ENCODE measurements at regions of chr17 and their contacts with region 1.

Region 1: GRCh38 chr17:77404812-77405581 is 264.2 kb downstream of the SEC14L1 start:
- DNase-seq: peak; percentile 83
- H3K4me3 Mint-ChIP-seq: peak overlapping the region; percentile 92
- H3K27ac Mint-ChIP-seq: peak overlapping the region; percentile 92
- H3K4me1 Mint-ChIP-seq: peaks cover 88% of the 10 kb centered on the region
- H3K27me3 Mint-ChIP-seq: no peaks in the 10 kb centered on the region

Region 2: GRCh38 chr17:77372444-77373298 is 32.3 kb before region 1 on chr17:
- intact Hi-C with region 1: loop called (anchors 1 kb)
- DNase-seq: peak; percentile 76
- H3K4me3 Mint-ChIP-seq: peak overlapping the region; percentile 76
- H3K27ac Mint-ChIP-seq: peak overlapping the region; percentile 68
- H3K4me1 Mint-ChIP-seq: peaks cover 57% of the 10 kb centered on the region
- H3K27me3 Mint-ChIP-seq: no peaks in the 10 kb centered on the region

Region 3: GRCh38 chr17:77420804-77421629 is 16.0 kb after region 1 on chr17:
- intact Hi-C with region 1: loop called (anchors 2 kb)
- DNase-seq: no peak
- H3K4me3 Mint-ChIP-seq: peak overlapping the region; percentile 29
- H3K27ac Mint-ChIP-seq: peak overlapping the region; percentile 37
- H3K4me1 Mint-ChIP-seq: peaks cover 28% of the 10 kb centered on the region
- H3K27me3 Mint-ChIP-seq: no peaks in the 10 kb centered on the region

Region 4: GRCh38 chr17:77444984-77445759 is 40.2 kb after region 1 on chr17:
- intact Hi-C with region 1: loop called (anchors 2 kb)
- DNase-seq: peak; percentile 80
- H3K4me3 Mint-ChIP-seq: peak overlapping the region; percentile 79
- H3K27ac Mint-ChIP-seq: peak overlapping the region; percentile 97
- H3K4me1 Mint-ChIP-seq: peaks cover 85% of the 10 kb centered on the region
- H3K27me3 Mint-ChIP-seq: no peaks in the 10 kb centered on the region

Region 5: DNA sequence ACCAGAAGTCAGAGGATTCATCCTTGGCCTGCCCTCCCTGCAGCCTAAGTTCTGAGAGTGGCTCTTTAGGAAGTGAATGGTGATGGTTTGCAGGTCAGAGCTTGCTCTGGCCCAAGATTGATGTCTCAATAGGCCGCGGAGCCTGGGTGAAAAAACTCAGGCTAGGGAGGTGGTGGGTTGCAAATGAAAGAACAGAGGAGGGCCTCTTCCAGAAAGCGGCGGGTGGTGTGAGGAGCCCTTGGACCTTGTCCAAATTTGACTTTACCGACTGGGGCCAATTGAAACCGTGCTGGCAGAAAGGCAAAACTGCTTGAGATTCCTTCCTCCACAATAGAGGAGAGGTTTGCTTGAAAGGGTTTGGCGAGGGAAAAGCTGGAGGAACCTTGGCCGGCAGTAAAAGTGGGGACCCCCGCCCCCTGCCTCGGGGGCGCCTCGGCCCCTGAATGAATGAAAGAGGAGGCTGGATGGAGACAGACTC is 67.0 kb after region 1 on chr17:
- intact Hi-C with region 1: loop called (anchors 1 kb)
- DNase-seq: no peak
- H3K4me3 Mint-ChIP-seq: peak overlapping the region; percentile 59
- H3K27ac Mint-ChIP-seq: peak overlapping the region; percentile 88
- H3K4me1 Mint-ChIP-seq: peaks cover 83% of the 10 kb centered on the region
- H3K27me3 Mint-ChIP-seq: no peaks in the 10 kb centered on the region

Measured in activated T-helper 1 cell treated with anti-CD3 and anti-CD28 coated beads, Interleukin-12 subunit alpha, Interleukin-12 subunit beta, Interleukin-2, Interleukin-4 antibody, amounts not matched to agents 30 ng/mL and 10 ng/mL and 1 ng/mL, durations not matched to agents 14 hours and 24 hours and 36 hours (primary cell).